ENCODE measurements at regions of chrX and their contacts with region 1.

Region 1: GRCh38 chrX:71032516-71032915 is 35.6 kb downstream of the SNX12 start:
- DNase-seq: no peak
- H3K4me3 ChIP-seq: no peak overlapping the region
- H3K27ac ChIP-seq: no peak overlapping the region
- H3K4me1 ChIP-seq: no peaks in the 10 kb centered on the region
- H3K27me3 ChIP-seq: no peaks in the 10 kb centered on the region
- CTCF ChIP-seq: no peak

Region 2: GRCh38 chrX:70577442-70577841 is 455.1 kb before region 1 on chrX:
- CTCF ChIA-PET with region 1: interaction called, 10 read pairs
- POLR2A ChIA-PET with region 1: no interaction called
- intact Hi-C with region 1: no loop called
- DNase-seq: no peak
- H3K4me3 ChIP-seq: no peak overlapping the region
- H3K27ac ChIP-seq: no peak overlapping the region
- H3K4me1 ChIP-seq: no peaks in the 10 kb centered on the region
- H3K27me3 ChIP-seq: no peaks in the 10 kb centered on the region
- CTCF ChIP-seq: no peak

Region 3: DNA sequence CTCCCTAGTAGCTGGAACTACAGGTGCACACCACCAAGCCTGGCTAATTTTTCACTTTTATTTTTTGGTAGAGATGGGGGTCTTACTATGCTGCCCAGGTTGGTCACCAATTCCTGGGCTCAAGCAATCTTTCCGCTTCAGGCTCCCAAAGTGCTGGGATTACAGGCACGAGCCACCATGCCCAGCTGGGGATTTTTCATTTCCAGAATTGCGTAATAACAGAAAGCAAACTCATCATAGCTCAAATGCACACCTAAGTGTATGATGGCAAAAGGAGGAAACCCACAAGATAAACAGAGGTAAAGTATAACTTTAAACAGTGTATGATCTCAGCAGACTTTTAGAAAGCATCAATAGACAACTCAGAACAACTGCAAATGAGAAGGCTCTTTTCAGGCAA is 180.2 kb before region 1 on chrX:
- CTCF ChIA-PET with region 1: no interaction called
- POLR2A ChIA-PET with region 1: no interaction called
- intact Hi-C with region 1: no loop called
- DNase-seq: no peak
- H3K4me3 ChIP-seq: no peak overlapping the region
- H3K27ac ChIP-seq: no peak overlapping the region
- H3K4me1 ChIP-seq: no peaks in the 10 kb centered on the region
- H3K27me3 ChIP-seq: no peaks in the 10 kb centered on the region
- CTCF ChIP-seq: no peak